Endothelial cell of umbilical vein (primary cell): ENCODE measurements at regions of chr2 and their contacts with region 1.

Region 1: GRCh38 chr2:86035883-86036668 is 69.6 kb downstream of the POLR1A start:
- DNase-seq: peak; percentile 94
- H3K4me3 ChIP-seq: no peak overlapping the region
- H3K27ac ChIP-seq: peak overlapping the region; percentile 96
- H3K4me1 ChIP-seq: peaks cover 43% of the 10 kb centered on the region
- H3K27me3 ChIP-seq: no peaks in the 10 kb centered on the region
- CTCF ChIP-seq: peak in 1 of 2 donors; percentile 30
- POLR2A ChIP-seq: no peak

Region 2: GRCh38 chr2:85772019-85772745 is 263.9 kb before region 1 on chr2:
- CTCF ChIA-PET with region 1: no interaction called
- POLR2A ChIA-PET with region 1: no interaction called
- dilution Hi-C with region 1: no loop called
- intact Hi-C with region 1: loop called (anchors 1 kb)
- DNase-seq: peak; percentile 100
- H3K4me3 ChIP-seq: no peak overlapping the region
- H3K27ac ChIP-seq: peak overlapping the region; percentile 100
- H3K4me1 ChIP-seq: peaks cover 38% of the 10 kb centered on the region
- H3K27me3 ChIP-seq: no peaks in the 10 kb centered on the region
- CTCF ChIP-seq: peak; percentile 32 to 42
- POLR2A ChIP-seq: peak; percentile 55

Region 3: GRCh38 chr2:85933753-85934594 is 102.1 kb before region 1 on chr2:
- CTCF ChIA-PET with region 1: no interaction called
- POLR2A ChIA-PET with region 1: no interaction called
- dilution Hi-C with region 1: no loop called
- intact Hi-C with region 1: loop called (anchors 1 kb)
- DNase-seq: peak; percentile 79
- H3K4me3 ChIP-seq: no peak overlapping the region
- H3K27ac ChIP-seq: no peak overlapping the region
- H3K4me1 ChIP-seq: peaks cover 36% of the 10 kb centered on the region
- H3K27me3 ChIP-seq: no peaks in the 10 kb centered on the region
- CTCF ChIP-seq: no peak
- POLR2A ChIP-seq: no peak

Region 4: DNA sequence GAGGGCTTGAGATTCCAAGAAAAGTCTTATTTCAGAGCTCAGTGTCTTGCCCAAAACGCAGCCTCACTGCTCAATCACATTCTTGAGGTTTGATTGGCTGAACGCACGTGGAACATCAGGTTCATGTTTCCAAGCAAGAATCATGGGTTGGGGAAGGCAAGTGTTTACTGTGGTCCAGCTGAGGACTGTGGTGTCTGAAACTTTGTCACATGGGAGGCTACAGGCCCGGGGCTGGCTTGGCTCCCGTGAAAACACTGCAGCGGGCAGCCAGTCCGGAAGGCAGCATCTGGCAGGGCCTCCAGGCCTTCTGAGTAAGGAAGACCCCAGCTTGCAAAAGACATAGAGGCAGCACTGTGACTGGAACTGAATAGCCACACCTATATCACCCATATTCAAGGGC is 15.1 kb before region 1 on chr2:
- CTCF ChIA-PET with region 1: interaction called, 19 read pairs
- POLR2A ChIA-PET with region 1: interaction called, 6 read pairs
- dilution Hi-C with region 1: no loop called
- intact Hi-C with region 1: no loop called
- DNase-seq: peak; percentile 87
- H3K4me3 ChIP-seq: no peak overlapping the region
- H3K27ac ChIP-seq: no peak overlapping the region
- H3K4me1 ChIP-seq: peaks cover 15% of the 10 kb centered on the region
- H3K27me3 ChIP-seq: no peaks in the 10 kb centered on the region
- CTCF ChIP-seq: no peak
- POLR2A ChIP-seq: no peak

Region 5: DNA sequence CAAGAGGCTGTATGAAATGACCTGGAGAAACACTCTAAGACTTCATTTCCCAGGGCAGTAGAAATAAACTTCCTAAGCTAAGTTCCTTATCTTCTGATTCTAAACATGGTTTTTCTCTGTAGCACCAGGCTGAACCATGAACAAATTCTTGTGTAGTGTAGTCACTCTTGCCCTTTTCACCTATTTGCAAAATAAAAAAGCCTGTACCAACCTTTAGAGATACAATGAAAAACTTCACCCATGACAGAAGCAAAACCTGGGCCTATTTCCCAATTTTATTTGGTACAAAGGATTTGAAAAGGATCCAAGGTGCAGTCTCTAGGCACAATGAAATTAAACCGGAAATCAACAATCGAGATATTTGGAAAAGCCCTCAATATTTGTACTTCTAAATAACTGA is 26.0 kb after region 1 on chr2:
- CTCF ChIA-PET with region 1: no interaction called
- POLR2A ChIA-PET with region 1: no interaction called
- dilution Hi-C with region 1: no loop called
- intact Hi-C with region 1: loop called (anchors 1 kb)
- DNase-seq: peak; percentile 80
- H3K4me3 ChIP-seq: no peak overlapping the region
- H3K27ac ChIP-seq: peak overlapping the region; percentile 55
- H3K4me1 ChIP-seq: peaks cover 20% of the 10 kb centered on the region
- H3K27me3 ChIP-seq: no peaks in the 10 kb centered on the region
- CTCF ChIP-seq: no peak
- POLR2A ChIP-seq: no peak

Region 6: GRCh38 chr2:86072271-86072858 is 36.3 kb after region 1 on chr2:
- CTCF ChIA-PET with region 1: interaction called, 49 read pairs
- POLR2A ChIA-PET with region 1: no interaction called
- dilution Hi-C with region 1: no loop called
- intact Hi-C with region 1: loop called (anchors 1 kb)
- DNase-seq: peak; percentile 84
- H3K4me3 ChIP-seq: no peak overlapping the region
- H3K27ac ChIP-seq: peak overlapping the region; percentile 27
- H3K4me1 ChIP-seq: peaks cover 16% of the 10 kb centered on the region
- H3K27me3 ChIP-seq: no peaks in the 10 kb centered on the region
- CTCF ChIP-seq: no peak
- POLR2A ChIP-seq: no peak

Region 7: DNA sequence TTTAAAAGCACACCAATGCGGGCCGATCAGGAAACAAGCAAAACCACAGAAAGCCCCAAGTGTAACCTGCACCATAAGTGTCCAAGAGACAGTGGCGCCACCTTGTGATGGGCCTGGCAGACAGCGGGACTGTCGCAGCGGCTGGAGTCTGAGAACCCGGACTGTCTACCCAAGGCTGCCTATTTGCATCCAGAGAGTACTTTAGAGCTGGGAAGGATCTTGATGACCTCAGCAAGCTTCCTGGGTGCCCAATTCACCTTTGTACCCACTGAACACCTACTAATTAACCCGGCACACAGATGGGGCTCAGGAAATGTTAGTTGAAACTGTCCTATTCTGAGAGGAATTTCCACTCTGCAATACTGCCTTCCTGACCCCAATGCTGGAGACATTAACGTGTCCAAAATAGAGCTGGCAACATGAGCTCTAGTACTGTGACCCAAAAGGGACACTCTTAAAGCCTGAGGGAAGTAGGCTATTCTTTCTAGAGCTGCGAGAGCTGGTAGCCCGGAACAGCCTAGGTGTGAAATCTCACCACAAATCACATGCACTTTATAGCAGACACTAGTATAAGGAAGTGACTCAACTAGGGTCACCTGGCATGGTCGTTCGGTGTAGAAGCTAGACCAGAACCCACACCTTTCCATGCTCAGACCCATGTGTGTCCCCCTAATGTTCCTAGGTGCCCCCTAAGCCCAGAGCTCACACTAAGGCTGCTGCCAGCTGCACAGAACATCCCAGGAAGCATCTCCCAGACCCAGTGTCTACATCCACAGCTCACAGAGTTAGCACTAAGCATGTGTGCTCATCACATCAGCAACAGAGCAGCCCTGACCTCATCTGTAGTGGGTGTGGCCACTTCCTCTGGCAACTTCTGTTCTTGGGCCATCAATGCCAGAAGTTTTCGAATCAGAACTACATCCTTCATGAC is 44.2 kb after region 1 on chr2:
- CTCF ChIA-PET with region 1: interaction called, 49 read pairs
- POLR2A ChIA-PET with region 1: no interaction called
- dilution Hi-C with region 1: no loop called
- intact Hi-C with region 1: no loop called
- DNase-seq: peak; percentile 58
- H3K4me3 ChIP-seq: no peak overlapping the region
- H3K27ac ChIP-seq: peak overlapping the region; percentile 9
- H3K4me1 ChIP-seq: peaks cover 3% of the 10 kb centered on the region
- H3K27me3 ChIP-seq: no peaks in the 10 kb centered on the region
- CTCF ChIP-seq: peak; percentile 84 to 91
- POLR2A ChIP-seq: no peak

Region 8: GRCh38 chr2:86541334-86541733 is 505.3 kb after region 1 on chr2:
- CTCF ChIA-PET with region 1: no interaction called
- POLR2A ChIA-PET with region 1: no interaction called
- dilution Hi-C with region 1: no loop called
- intact Hi-C with region 1: no loop called
- DNase-seq: no peak
- H3K4me3 ChIP-seq: no peak overlapping the region
- H3K27ac ChIP-seq: no peak overlapping the region
- H3K4me1 ChIP-seq: no peaks in the 10 kb centered on the region
- H3K27me3 ChIP-seq: no peaks in the 10 kb centered on the region
- CTCF ChIP-seq: no peak
- POLR2A ChIP-seq: no peak